Right cardiac atrium (tissue), 5 donors: ENCODE measurements at regions of chr1 and their contacts with region 1.

Region 1: DNA sequence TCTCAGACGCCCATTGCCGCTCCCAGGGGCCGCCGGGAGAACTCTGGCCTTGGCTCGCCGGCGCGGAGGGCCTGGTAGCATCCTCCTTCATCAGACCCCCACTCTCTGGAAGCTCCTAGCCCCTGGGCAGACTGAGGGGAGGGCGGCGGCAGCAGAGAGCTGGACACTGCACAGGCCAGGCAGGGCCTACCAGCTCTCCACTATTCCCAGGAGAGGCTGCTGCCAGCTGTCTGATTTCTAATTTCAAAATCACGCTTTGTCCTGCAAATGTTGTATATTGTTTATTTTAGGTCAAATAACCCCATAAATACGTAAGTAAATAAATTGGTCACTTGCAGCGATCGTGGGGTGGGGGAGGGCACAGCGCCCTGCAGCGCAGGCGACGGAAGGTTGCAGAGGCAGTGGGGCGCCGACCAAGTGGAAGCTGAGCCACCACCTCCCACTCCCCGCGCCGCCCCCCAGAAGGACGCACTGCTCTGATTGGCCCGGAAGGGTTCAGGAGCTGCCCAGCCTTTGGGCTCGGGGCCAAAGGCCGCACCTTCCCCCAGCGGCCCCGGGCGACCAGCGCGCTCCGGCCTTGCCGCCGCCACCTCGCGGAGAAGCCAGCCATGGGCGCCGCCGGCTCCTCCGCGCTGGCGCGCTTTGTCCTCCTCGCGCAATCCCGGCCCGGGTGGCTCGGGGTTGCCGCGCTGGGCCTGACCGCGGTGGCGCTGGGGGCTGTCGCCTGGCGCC is at the start of gene MTARC1:
- DNase-seq: peak; percentile 79 to 92 (median 92)
- ATAC-seq: peak; percentile 89 to 93
- H3K4me3 ChIP-seq: peak within 1 kb of the TSS; percentile 55
- H3K27ac ChIP-seq: peak within 1 kb of the TSS; percentile 54
- H3K4me1 ChIP-seq: peaks cover 2% of the 10 kb centered on the region
- H3K27me3 ChIP-seq: no peaks in the 10 kb centered on the region
- total RNA-seq, gene MTARC1: 3.2 to 10.9 (median 3.5) TPM

Region 2: GRCh38 chr1:220281159-220281574 is 505.3 kb before region 1 on chr1:
- intact Hi-C with region 1: loop called in 1 of 4 experiments (anchors 10 kb)
- DNase-seq: no peak
- ATAC-seq: no peak
- H3K4me3 ChIP-seq: no peak overlapping the region
- H3K27ac ChIP-seq: no peak overlapping the region
- H3K4me1 ChIP-seq: no peaks in the 10 kb centered on the region
- H3K27me3 ChIP-seq: no peaks in the 10 kb centered on the region